PC-3 (cell line): ENCODE measurements at regions of chr16 and their contacts with region 1.

Region 1: DNA sequence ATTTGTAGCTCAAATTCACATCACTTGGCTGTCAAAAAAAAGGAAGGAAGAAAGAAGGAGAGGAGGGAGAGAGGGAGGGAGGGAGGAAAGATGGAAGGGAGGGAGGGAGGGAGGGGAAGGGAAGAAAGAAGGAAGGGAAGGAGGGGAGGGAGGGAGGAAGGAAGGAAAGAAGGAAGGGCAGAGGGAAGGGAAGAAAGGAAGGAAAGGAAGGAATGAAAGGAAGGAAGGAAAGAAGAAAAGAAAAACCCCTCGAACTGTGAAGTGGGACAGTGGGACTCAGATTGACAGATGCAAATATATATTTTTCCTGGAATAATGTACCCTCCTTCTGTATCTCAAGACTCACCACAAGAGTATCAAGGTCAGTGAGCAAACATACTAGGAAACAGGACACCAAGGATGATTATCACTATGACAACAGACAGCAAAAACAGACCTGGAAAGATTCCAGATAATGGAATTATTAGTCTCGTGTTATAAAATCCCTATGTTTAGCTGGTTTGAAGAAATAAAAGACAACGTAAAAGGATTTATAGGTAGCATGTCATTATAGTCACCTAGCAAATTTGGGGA is 24.2 kb upstream of the ABCA3 start:
- DNase-seq: peak; percentile 4
- ATAC-seq: no peak
- H3K4me3 ChIP-seq: no peak overlapping the region
- H3K27ac ChIP-seq: no peak overlapping the region
- H3K4me1 ChIP-seq: no peaks in the 10 kb centered on the region
- H3K27me3 ChIP-seq: peaks cover 14% of the 10 kb centered on the region; the same call in 1 of the 2 replicates
- CTCF ChIP-seq: no peak

Region 2: DNA sequence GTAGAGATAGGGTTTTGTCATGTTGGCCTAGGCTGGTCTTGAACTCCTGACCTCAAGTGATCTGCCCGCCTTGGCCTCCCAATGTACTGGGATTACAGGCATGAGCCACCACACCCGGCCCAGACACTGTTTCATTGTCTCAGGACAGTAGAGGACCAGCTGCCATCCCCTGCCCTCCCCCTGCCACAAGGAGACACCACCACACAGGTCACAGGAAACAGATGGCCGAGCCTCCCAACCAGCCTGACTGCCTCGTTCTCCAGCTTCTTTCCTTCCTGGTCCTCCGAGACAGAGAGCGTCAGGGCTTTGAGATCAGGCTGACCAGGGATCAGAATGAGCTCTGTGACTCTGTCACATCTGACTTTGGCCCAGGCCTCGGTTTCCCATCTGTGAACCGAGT is 76.0 kb before region 1 on chr16:
- CTCF ChIA-PET with region 1: no interaction called
- POLR2A ChIA-PET with region 1: interaction called, 19 read pairs
- intact Hi-C with region 1: no loop called
- DNase-seq: no peak
- ATAC-seq: no peak
- H3K4me3 ChIP-seq: no peak overlapping the region
- H3K27ac ChIP-seq: no peak overlapping the region
- H3K4me1 ChIP-seq: no peaks in the 10 kb centered on the region
- H3K27me3 ChIP-seq: no peaks in the 10 kb centered on the region
- CTCF ChIP-seq: no peak

Region 3: DNA sequence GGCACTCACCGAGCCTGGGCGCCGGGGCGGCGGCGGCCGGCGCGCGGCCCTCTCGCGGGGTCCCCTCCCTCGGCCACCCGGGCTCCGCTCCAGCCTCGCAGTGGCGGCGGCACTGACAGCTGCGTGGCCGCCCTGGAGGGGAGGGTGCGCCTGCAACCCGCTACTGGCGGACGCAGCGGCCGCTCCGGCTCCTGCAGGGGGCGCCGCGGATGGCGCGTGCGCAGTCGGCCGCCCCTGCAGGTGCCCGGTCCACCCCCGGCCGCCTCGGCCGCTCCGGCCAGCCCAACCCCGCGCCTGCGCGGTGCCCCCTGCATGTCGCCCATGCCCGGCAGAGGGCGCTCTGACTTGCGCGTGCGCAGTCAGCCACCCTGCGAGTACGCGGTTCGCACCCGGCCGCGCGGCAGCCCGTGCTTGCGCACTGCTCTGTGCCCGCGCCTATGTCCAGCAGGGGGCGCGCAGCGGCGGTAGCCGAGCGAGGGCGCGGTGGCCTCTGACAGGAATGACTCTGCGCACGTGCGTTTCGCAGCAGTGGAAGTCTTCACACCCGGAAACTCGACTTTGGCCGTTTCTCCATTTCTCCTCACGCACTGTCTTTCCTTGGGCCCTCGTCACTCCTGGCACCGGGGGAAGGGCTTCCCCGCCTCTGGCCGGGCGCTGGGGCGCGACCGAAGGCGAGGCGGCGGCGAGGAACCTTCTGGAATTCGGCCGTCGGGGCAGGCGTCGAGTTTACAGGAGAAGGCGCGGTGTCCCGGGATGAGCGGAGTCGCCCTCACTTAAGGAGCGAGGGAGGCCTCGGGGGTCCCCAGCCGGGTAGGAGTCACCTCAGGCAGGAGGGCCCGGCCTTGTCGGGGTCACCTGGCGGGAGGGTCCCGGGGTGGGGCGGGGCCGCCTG is 23.9 kb before region 1 on chr16 and contains the start of gene ABCA3:
- CTCF ChIA-PET with region 1: no interaction called
- POLR2A ChIA-PET with region 1: no interaction called
- intact Hi-C with region 1: no loop called
- DNase-seq: peak; percentile 94
- ATAC-seq: peak; percentile 89
- H3K4me3 ChIP-seq: peak within 1 kb of the TSS; percentile 81
- H3K27ac ChIP-seq: no peak within 1 kb of the TSS
- H3K4me1 ChIP-seq: 0 out of 2 replicates have a peak, but pooled peaks cover 3% of the 10 kb centered on the region
- H3K27me3 ChIP-seq: no peaks in the 10 kb centered on the region
- CTCF ChIP-seq: peak; percentile 89
- total RNA-seq, gene ABCA3: 11.0 and 15.5 TPM in 2 replicates

Region 4: DNA sequence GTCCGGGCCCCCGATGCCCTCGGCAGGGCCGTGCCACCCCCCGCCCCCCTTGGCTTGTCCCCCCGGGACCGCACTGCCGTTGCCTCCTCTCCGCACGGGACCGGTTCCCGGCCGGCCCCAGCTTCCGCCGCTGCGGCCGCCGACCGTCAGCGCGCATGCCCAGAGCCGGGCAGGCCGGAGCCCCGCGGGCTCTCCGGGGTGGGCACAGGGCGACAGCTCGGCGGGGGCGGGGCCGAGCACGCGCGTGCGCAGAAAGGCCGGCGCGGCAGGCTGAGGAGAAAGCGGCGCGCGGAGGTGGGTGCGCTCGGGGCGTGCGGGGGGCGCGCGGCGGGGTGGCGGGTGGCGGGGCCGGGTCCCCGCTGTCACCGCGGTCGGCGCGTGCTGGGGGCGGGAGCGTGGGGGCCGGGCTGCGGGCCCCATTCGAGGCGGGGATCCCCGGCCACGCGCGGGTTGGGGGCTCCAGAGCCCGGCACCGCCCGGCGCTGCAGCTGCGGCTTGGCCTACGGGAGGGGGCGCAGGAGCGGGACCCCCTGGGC is 110.2 kb after region 1 on chr16 and contains the start of gene TBC1D24:
- CTCF ChIA-PET with region 1: no interaction called
- POLR2A ChIA-PET with region 1: no interaction called
- intact Hi-C with region 1: no loop called
- DNase-seq: peak; percentile 83
- ATAC-seq: peak; percentile 70
- H3K4me3 ChIP-seq: peak within 1 kb of the TSS; percentile 77
- H3K27ac ChIP-seq: no peak within 1 kb of the TSS
- H3K4me1 ChIP-seq: no peaks in the 10 kb centered on the region; the same call in 1 of the 2 replicates
- H3K27me3 ChIP-seq: no peaks in the 10 kb centered on the region
- CTCF ChIP-seq: no peak
- total RNA-seq, gene TBC1D24: 11.3 and 15.2 TPM in 2 replicates